A549 (cell line): ENCODE measurements at regions of chr7 and their contacts with region 1.

Region 1: GRCh38 chr7:120805636-120806388 is 52.1 kb downstream of the TSPAN12 start:
- DNase-seq: peak; percentile 51 to 59
- ATAC-seq: peak; percentile 56 to 82; a peak in 3 of 6 replicates
- H3K4me3 ChIP-seq: no peak overlapping the region
- H3K27ac ChIP-seq: no peak overlapping the region
- H3K4me1 ChIP-seq: no peaks in the 10 kb centered on the region
- CTCF ChIP-seq: peak; percentile 87
- EP300 ChIP-seq: no peak
- POLR2A ChIP-seq: no peak
- RAD21 ChIP-seq: peak; percentile 57 to 59

Region 2: DNA sequence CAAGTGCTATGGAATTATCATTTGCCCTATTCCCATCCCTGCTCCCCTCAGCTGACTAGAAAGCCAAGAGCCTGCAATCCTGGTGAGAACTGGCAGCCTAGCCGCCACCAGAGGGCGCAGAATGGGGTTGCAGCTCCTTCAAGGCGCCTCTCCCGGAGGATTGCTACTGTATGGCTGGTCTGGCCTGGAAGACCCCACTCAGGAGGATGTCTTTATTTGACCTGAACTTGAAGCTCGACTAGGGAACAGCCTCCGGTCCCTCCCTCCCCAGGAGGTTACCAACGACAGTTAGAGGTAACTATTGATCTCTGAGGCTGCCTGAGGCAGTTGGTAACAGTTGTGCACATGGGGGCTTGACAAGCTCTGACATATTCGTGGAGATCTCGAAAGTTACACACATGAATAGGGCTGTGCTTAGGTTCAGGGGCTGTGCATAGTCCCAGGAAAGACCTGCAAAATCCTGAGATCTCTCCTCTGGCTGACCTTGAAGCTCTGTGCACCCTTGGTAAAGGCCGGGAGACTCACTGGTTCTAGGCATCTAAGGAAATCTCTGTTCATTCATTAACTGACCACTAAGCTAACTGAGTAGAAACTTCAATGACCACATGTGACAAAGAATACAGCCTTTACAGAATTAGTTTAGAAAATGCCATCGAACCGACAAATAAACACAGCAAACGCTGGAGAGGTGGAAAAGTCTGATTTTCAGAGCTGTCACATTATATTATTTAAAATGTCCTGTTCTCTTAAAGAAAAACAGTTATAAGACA is 13.5 kb before region 1 on chr7:
- CTCF ChIA-PET with region 1: interaction called, 49 read pairs
- POLR2A ChIA-PET with region 1: no interaction called
- DNase-seq: peak; percentile 60 to 73
- ATAC-seq: peak; percentile 99 to 100
- H3K4me3 ChIP-seq: no peak overlapping the region
- H3K27ac ChIP-seq: no peak overlapping the region
- H3K4me1 ChIP-seq: no peaks in the 10 kb centered on the region
- CTCF ChIP-seq: peak; percentile 77
- EP300 ChIP-seq: no peak
- POLR2A ChIP-seq: no peak
- RAD21 ChIP-seq: peak; percentile 51 to 58; a peak in 4 of 5 replicates

Region 3: DNA sequence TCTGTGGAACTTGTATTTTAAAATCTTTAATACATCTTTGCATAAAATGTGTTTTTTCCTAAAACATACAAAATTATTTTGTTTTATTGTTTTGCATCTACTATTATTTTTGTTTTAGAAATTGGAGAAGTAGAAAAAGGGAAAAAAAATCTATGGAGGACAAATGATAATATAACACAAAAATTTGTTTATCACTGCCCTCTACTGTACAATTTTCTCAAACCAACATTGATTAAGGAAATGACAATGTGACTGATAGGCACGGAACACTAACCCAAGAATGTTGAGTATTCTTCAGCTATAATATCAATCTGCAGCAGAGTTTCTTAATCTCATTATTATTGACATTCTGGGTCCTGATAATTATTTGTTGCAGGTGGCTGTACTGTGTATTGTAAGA is 135.3 kb after region 1 on chr7:
- CTCF ChIA-PET with region 1: interaction called, 13 read pairs
- POLR2A ChIA-PET with region 1: no interaction called
- DNase-seq: no peak
- ATAC-seq: peak; percentile 55 to 70; a peak in 2 of 6 replicates
- H3K4me3 ChIP-seq: no peak overlapping the region
- H3K27ac ChIP-seq: no peak overlapping the region
- H3K4me1 ChIP-seq: no peaks in the 10 kb centered on the region
- CTCF ChIP-seq: peak; percentile 41
- EP300 ChIP-seq: no peak
- POLR2A ChIP-seq: no peak
- RAD21 ChIP-seq: peak; percentile 43 to 47; a peak in 4 of 5 replicates